ENCODE measurements at regions of chr19 and their contacts with region 1.

Region 1: DNA sequence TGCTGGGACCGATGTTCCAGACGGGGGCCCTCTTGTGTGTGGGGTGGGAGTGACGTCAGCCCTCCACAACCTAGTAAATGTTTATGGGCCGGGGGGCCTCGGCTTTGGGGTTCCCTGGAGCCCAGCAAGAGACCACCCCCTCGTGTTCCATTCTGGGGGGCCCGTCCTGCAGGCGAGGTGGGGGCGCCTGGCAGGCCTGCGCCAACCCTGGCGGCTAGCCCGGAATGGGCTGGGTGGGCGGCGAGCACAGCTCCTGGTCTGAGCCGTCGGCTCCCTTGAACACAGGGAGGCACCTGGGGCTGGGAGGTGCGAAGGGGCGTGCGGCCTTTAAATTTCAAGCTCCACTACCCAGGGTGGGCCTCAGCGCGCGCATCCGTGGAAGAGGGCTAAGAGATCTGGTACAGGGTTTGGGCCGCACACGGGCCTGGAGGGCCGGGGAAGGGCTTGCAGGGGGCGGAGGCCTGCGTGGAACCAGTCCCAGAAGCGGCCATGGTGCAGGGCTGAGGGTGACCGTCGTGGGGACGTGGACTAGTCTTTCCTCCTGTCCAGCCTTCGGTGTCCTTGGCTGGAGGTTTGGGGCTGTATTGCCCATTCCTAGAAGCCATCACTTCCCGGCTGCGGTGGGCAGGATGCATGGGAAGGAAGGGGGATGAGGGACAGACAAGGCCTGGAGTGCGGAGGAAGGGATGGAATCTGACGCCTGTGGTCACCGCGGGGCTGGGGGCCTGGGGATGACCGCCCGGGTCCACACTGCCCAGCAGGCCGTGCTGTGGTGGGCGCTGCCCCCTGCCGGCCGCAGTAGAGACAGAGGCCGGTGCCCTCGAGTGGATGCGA is 11.4 kb downstream of the NDUFA11 start:
- DNase-seq: peak; percentile 65
- ATAC-seq: peak; percentile 66

Region 2: GRCh38 chr19:5803752-5804515 is 88.2 kb before region 1 on chr19:
- intact Hi-C with region 1: loop called (anchors 5 kb)
- DNase-seq: peak; percentile 91
- ATAC-seq: peak; percentile 89